ENCODE measurements at regions of chr3 and their contacts with region 1.

Region 1: DNA sequence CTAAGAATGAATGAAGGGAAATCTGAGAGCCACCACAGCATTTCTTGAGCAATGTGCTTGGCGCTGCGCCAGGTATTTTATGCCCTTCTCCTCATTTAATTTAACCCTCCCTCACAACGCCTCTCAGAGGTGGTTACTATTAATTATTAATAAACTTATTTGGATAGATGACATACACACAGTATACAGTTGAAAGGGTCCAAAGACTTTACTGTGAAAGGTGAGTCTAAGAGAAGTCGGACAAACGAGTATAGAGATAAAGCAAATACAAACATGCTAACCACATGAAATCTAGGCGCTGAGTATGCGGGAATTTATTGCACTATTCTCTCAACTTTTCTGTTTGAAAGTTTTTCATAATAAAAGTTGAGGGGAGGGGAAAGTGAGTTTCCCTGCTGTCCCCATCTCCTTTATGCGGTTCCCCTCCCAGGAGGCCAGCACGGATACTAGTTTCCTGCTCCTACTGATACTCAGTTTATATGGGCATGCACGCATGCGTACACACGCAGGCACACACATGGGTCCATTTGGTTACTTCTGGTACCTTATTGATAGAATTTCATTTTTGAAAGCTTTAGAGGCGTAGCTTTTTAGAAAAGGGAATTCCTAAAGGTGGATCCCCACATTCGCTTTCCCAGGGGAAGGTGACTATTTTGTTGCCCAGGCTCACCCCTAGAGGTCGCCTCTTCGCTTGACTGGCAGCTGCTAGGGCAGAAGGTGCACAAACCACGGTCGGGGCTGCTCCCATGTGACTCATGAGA is 28.5 kb upstream of the KCTD6 start:
- DNase-seq: no peak
- ATAC-seq: peak; percentile 98
- H3K4me3 ChIP-seq: no peak overlapping the region
- H3K27ac ChIP-seq: no peak overlapping the region
- H3K4me1 ChIP-seq: no peaks in the 10 kb centered on the region
- H3K27me3 ChIP-seq: no peaks in the 10 kb centered on the region
- CTCF ChIP-seq: peak; percentile 90 to 91 (median 90)
- EP300 ChIP-seq: 0 out of 4 replicates have a peak, but pooled peaks of 1 of the 2 experiments have one; percentile 31
- POLR2A ChIP-seq: no peak
- RAD21 ChIP-seq: peak; percentile 67

Region 2: DNA sequence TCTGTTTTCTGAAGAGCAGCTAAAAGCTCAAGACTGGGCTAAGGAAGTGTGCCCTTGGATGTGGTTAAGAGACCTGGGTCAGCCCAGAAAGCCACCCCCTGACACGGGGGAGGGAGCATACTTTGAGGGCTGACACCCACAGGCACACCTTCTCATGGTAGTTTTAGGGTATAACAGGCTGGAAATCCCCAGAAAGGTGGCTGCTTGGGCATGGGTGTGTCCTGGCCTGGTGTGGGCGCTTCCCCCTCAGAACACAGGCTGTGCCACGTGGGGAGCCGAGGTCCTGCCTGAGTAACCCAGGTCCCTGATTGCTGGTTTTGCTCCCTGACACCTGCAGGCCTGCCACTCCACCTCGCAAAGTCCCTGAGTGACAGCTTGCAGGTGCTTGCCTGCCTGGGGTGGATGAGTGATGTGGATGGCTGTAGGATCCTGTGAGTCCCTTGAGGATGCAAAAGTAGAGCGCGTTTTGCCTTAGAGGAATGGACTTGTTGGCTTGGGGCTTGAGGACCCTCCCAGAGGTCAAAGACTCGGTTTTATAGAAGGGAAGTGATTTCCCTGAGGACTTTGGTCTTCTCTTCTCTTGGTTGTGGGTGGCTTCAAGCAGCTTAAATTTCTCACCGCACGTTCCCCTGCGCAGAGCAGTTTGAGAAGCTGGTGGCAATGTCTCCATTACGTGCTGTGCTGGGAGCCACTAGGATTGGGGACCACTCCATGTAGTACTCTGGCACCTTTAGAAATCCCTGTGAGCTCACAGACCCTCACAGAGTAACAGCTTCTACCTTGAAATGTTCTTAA is 347.0 kb before region 1 on chr3:
- CTCF ChIA-PET with region 1: no interaction called
- POLR2A ChIA-PET with region 1: no interaction called
- RAD21 ChIA-PET with region 1: no interaction called
- SMC1A ChIA-PET with region 1: no interaction called
- in situ Hi-C with region 1: no loop called
- intact Hi-C with region 1: no loop called
- DNase-seq: peak; percentile 83
- ATAC-seq: peak; percentile 90
- H3K4me3 ChIP-seq: no peak overlapping the region
- H3K27ac ChIP-seq: peak overlapping the region; percentile 47
- H3K4me1 ChIP-seq: peaks cover 36% of the 10 kb centered on the region
- H3K27me3 ChIP-seq: no peaks in the 10 kb centered on the region
- CTCF ChIP-seq: no peak
- EP300 ChIP-seq: peak in 1 of 2 experiments; percentile 70; a peak in 1 of 4 replicates
- POLR2A ChIP-seq: no peak
- RAD21 ChIP-seq: no peak

Region 3: DNA sequence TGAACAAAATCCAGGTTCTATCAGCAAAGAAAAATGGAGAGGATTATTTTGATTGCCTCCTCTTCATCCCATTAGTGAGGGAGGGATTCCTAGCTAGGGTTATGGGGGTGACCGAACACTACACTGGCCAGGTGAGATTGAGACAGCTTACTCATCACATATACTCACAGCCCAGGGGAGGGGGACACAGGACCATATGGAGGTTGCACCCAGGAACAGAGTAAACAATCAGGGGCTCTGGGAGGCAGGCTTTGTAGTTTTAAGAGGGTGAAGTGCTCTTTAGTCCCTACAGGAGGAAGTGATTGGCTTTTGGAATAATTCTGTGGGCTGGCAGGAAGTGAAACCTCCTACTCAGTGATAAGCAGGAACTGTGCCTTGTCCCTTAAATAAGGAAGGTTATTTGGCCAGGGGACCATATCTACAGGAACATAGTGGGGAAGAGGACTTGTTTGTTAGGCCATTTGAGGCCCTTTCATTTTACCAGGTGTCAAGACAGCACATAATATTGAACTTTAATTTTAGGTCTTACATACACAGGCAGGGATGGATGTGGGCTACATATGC is 11.1 kb after region 1 on chr3:
- CTCF ChIA-PET with region 1: interaction called, 10 read pairs
- POLR2A ChIA-PET with region 1: no interaction called
- RAD21 ChIA-PET with region 1: no interaction called
- SMC1A ChIA-PET with region 1: no interaction called
- in situ Hi-C with region 1: no loop called
- intact Hi-C with region 1: no loop called
- DNase-seq: no peak
- ATAC-seq: peak; percentile 44
- H3K4me3 ChIP-seq: no peak overlapping the region
- H3K27ac ChIP-seq: no peak overlapping the region
- H3K4me1 ChIP-seq: peaks cover 6% of the 10 kb centered on the region; the same call in 1 of the 2 replicates
- H3K27me3 ChIP-seq: no peaks in the 10 kb centered on the region
- CTCF ChIP-seq: no peak
- EP300 ChIP-seq: no peak
- POLR2A ChIP-seq: no peak
- RAD21 ChIP-seq: no peak

Region 4: GRCh38 chr3:58497097-58497496 is 33.7 kb after region 1 on chr3:
- CTCF ChIA-PET with region 1: interaction called, 18 read pairs
- POLR2A ChIA-PET with region 1: interaction called, 3 read pairs
- RAD21 ChIA-PET with region 1: interaction called, 3 read pairs
- SMC1A ChIA-PET with region 1: interaction called, 3 read pairs
- in situ Hi-C with region 1: no loop called
- intact Hi-C with region 1: no loop called
- DNase-seq: no peak
- ATAC-seq: peak; percentile 66
- H3K4me3 ChIP-seq: no peak overlapping the region
- H3K27ac ChIP-seq: no peak overlapping the region
- H3K4me1 ChIP-seq: peaks cover 11% of the 10 kb centered on the region
- H3K27me3 ChIP-seq: no peaks in the 10 kb centered on the region
- CTCF ChIP-seq: no peak
- EP300 ChIP-seq: no peak
- POLR2A ChIP-seq: no peak
- RAD21 ChIP-seq: no peak

Region 5: DNA sequence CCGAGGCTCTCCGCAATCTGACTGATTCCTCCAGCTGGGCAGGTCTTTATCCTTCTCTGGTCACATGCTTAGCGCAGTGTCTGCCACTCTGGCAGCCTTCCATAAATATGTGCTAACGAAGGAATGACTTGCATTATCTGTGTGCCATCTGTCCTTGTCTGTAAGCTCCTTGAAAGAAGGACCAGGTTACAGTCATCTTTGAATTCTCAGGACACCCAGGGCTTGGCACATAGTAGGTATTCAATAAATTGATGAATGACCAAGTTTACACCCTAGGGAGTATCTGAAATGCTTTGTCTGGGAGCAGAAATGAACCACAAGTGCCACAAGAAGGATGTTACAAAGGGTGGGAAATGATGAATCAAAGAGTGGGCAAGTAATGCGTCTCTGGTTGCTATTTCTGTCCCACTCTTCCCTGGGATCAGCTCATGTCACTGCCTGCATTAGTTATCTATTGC is 219.7 kb after region 1 on chr3:
- CTCF ChIA-PET with region 1: no interaction called
- POLR2A ChIA-PET with region 1: no interaction called
- RAD21 ChIA-PET with region 1: no interaction called
- SMC1A ChIA-PET with region 1: no interaction called
- in situ Hi-C with region 1: no loop called
- intact Hi-C with region 1: no loop called
- DNase-seq: no peak
- ATAC-seq: peak; percentile 20; the same call in 2 of the 3 replicates
- H3K4me3 ChIP-seq: no peak overlapping the region
- H3K27ac ChIP-seq: no peak overlapping the region
- H3K4me1 ChIP-seq: no peaks in the 10 kb centered on the region
- H3K27me3 ChIP-seq: no peaks in the 10 kb centered on the region; a peak in 1 of 4 replicates
- CTCF ChIP-seq: no peak
- EP300 ChIP-seq: no peak
- POLR2A ChIP-seq: no peak
- RAD21 ChIP-seq: no peak

Region 6: GRCh38 chr3:59540696-59541095 is 1077.3 kb after region 1 on chr3:
- CTCF ChIA-PET with region 1: no interaction called
- POLR2A ChIA-PET with region 1: no interaction called
- RAD21 ChIA-PET with region 1: no interaction called
- SMC1A ChIA-PET with region 1: no interaction called
- in situ Hi-C with region 1: no loop called
- intact Hi-C with region 1: no loop called
- DNase-seq: peak; percentile 60
- ATAC-seq: peak; percentile 97
- H3K4me3 ChIP-seq: no peak overlapping the region
- H3K27ac ChIP-seq: no peak overlapping the region
- H3K4me1 ChIP-seq: no peaks in the 10 kb centered on the region
- H3K27me3 ChIP-seq: no peaks in the 10 kb centered on the region
- CTCF ChIP-seq: no peak
- EP300 ChIP-seq: peak; percentile 51 to 65; a peak in 2 of 4 replicates
- POLR2A ChIP-seq: no peak
- RAD21 ChIP-seq: no peak

Measured in GM12878 (cell line).